Esophagus muscularis mucosa (tissue), 4 donors: ENCODE measurements at regions of chr1 and their contacts with region 1.

Region 1: DNA sequence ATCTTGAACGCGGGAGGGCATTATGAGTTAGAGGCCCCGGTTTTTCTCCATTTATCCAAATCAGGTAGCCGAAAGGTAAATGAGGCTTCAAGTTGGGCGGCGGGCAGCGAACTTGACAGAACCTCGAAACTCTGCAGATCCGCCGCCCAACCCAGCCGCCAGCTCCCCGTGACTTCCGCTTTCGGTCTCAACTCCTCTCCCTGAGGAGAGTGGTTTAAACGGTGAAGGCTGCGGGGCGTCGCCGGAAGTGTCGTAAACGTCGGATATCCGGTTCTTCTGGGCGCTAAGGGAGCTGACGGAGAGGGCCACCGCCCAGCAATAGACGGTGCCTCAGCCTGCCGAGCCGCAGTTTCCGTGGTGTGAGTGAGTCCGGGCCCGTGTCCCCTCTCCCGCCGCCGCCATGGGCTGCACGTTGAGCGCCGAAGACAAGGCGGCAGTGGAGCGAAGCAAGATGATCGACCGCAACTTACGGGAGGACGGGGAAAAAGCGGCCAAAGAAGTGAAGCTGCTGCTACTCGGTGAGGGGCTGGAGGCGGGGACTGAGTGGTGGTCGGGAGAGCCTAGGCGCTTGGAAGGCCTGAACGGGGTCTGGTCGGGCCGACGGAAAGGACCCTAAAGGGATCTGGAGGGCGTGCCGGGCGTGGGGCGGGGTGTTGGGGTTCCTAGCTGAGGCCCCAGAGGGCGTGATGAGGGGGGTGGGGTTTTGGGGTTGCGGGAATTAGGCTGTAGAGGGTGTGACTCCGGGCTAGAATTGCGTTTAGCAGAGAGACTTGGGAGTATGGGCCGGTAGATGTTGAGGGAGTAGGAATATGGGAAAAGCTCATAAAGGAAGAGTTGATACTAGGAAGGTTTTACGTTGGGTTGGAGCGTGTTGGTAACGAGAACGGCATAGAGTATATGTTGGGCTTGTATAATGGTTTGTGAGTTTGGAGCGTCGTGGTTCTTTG is at the start of gene GNAI3:
- DNase-seq: peak; percentile 98
- H3K4me3 ChIP-seq: peak within 1 kb of the TSS; percentile 86 to 96 (median 92)
- H3K27ac ChIP-seq: peak within 1 kb of the TSS; percentile 94 to 96 (median 96)
- H3K4me1 ChIP-seq: peaks cover 21 to 59% (median 56%) of the 10 kb centered on the region in 4 donors
- H3K27me3 ChIP-seq: no peaks in the 10 kb centered on the region
- CTCF ChIP-seq: peak in 2 of 3 experiments; percentile 1 to 8
- EP300 ChIP-seq: no peak
- POLR2A ChIP-seq: peak; percentile 90
- total RNA-seq, gene GNAI3: 5.9 to 7.2 (median 6.6) TPM

Region 2: GRCh38 chr1:109620841-109621286 is 72.3 kb after region 1 on chr1:
- intact Hi-C with region 1: loop called (anchors 2 kb)
- DNase-seq: peak; percentile 98
- H3K4me3 ChIP-seq: peak overlapping the region; percentile 58 to 72 (median 64)
- H3K27ac ChIP-seq: peak overlapping the region; percentile 75 to 86 (median 80)
- H3K4me1 ChIP-seq: peaks cover 34 to 67% (median 64%) of the 10 kb centered on the region in 4 donors
- H3K27me3 ChIP-seq: no peaks in the 10 kb centered on the region
- CTCF ChIP-seq: no peak
- EP300 ChIP-seq: no peak
- POLR2A ChIP-seq: no peak

Region 3: GRCh38 chr1:109773146-109773899 is 224.7 kb after region 1 on chr1:
- intact Hi-C with region 1: loop called (anchors 2 kb)
- DNase-seq: peak; percentile 94
- H3K4me3 ChIP-seq: no peak overlapping the region
- H3K27ac ChIP-seq: no peak overlapping the region
- H3K4me1 ChIP-seq: peaks cover 7 to 21% (median 16%) of the 10 kb centered on the region in 4 donors
- H3K27me3 ChIP-seq: no peaks in the 10 kb centered on the region
- CTCF ChIP-seq: peak; percentile 86 to 92 (median 89)
- EP300 ChIP-seq: no peak
- POLR2A ChIP-seq: no peak